AG04449 (cell line): ENCODE measurements at regions of chr17 and their contacts with region 1.

Region 1: GRCh38 chr17:27601069-27601975 is 29.7 kb upstream of the LGALS9 start:
- DNase-seq: no peak
- H3K4me3 ChIP-seq: no peak overlapping the region
- CTCF ChIP-seq: peak; percentile 85

Region 2: GRCh38 chr17:27332485-27333409 is 268.6 kb before region 1 on chr17:
- CTCF ChIA-PET with region 1: interaction called, 75 read pairs
- POLR2A ChIA-PET with region 1: interaction called, 3 read pairs
- DNase-seq: peak; percentile 65
- H3K4me3 ChIP-seq: peak overlapping the region; percentile 56
- CTCF ChIP-seq: peak; percentile 93

Region 3: DNA sequence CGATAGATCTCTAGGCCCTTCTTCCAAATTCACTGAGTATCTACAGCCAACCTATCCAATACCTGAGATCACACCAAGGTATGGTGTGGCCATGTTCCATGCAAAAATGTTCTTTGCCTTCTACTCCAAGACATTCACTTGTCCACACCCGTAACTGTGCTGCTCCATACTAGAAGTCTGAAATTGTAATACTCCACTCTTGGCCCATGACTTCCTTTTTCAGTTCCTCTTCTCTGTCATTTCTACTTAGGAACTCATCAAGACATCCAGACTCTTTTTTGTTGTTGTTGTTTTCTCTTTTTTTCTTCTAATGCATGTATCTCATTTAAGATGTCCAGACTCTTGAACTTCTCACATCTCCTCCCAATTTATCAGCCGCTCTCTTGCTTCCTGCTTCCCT is 187.5 kb before region 1 on chr17:
- CTCF ChIA-PET with region 1: interaction called, 29 read pairs
- POLR2A ChIA-PET with region 1: no interaction called
- DNase-seq: no peak
- H3K4me3 ChIP-seq: no peak overlapping the region
- CTCF ChIP-seq: no peak

Region 4: GRCh38 chr17:27494192-27495091 is 106.9 kb before region 1 on chr17:
- CTCF ChIA-PET with region 1: interaction called, 12 read pairs
- POLR2A ChIA-PET with region 1: no interaction called
- DNase-seq: no peak
- H3K4me3 ChIP-seq: no peak overlapping the region
- CTCF ChIP-seq: peak; percentile 17

Region 5: GRCh38 chr17:27586203-27586721 is 15.1 kb before region 1 on chr17:
- CTCF ChIA-PET with region 1: interaction called, 181 read pairs
- POLR2A ChIA-PET with region 1: interaction called, 4 read pairs
- DNase-seq: peak; percentile 68
- H3K4me3 ChIP-seq: no peak overlapping the region
- CTCF ChIP-seq: no peak

Region 6: DNA sequence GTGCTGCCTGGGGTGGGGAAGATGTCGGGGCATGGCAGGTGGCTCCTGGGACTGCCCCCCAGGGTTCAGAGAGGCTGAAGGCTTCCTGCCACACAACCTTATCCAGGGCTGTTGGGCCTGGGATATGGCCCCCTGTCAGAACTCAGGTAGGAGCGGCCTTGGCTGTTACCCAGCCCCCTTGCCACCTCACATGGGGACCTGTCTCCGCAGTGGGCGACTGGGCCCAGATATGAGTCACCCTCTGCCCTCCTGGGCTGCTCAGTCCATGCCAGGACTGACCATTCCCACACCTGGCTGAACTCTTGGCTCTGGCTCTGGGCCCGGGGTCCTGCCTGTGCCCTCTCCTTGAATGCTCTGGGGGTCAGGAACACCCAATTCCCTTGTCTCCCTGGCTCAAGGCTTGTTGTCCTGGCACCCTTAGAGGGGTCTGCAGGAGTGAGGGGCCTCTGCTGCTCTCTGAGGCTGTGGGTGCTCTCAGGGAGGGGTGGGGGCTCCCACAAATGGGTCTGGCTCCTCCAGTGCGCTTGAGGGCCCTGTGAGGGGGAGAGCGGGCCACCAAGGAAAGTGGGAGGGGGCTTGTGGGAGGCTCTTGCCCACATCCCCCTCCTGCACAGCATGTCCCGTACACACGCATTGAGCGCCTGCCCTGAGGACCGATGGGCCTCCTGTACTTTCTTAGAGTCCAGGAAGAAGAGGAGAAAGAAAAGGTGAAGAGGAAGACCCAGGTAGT is 65.7 kb after region 1 on chr17:
- CTCF ChIA-PET with region 1: no interaction called
- POLR2A ChIA-PET with region 1: no interaction called
- DNase-seq: no peak
- H3K4me3 ChIP-seq: no peak overlapping the region
- CTCF ChIP-seq: no peak

Region 7: DNA sequence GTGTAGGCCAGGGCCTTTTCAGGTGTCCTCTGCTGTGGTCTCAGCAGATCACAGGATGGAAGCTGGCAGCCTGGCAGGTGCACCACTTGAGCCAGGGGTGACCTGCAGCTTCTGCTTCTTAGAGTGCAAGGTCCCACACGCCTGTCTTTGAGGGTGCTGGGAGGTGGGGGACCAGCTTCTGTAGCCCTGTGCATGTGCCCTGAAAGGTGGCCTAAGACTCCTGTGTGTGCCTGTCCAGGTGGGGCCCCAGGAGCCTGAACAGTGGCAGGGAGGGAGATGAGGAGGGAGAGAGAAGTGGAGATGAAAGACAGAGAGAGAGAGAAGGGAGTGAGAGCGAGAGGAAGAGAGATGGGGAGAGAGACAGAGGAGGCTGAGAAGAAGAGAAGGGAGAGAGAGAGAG is 75.9 kb after region 1 on chr17:
- CTCF ChIA-PET with region 1: no interaction called
- POLR2A ChIA-PET with region 1: no interaction called
- DNase-seq: no peak
- H3K4me3 ChIP-seq: no peak overlapping the region
- CTCF ChIP-seq: no peak

Region 8: GRCh38 chr17:27743281-27743885 is 142.1 kb after region 1 on chr17:
- CTCF ChIA-PET with region 1: no interaction called
- POLR2A ChIA-PET with region 1: no interaction called
- DNase-seq: no peak
- H3K4me3 ChIP-seq: no peak overlapping the region
- CTCF ChIP-seq: no peak

Region 9: GRCh38 chr17:27879987-27880608 is 278.8 kb after region 1 on chr17:
- CTCF ChIA-PET with region 1: interaction called, 28 read pairs
- POLR2A ChIA-PET with region 1: no interaction called
- DNase-seq: no peak
- H3K4me3 ChIP-seq: no peak overlapping the region
- CTCF ChIP-seq: peak; percentile 92

Region 10: GRCh38 chr17:27907976-27908558 is 306.7 kb after region 1 on chr17:
- CTCF ChIA-PET with region 1: no interaction called
- POLR2A ChIA-PET with region 1: no interaction called
- DNase-seq: no peak
- H3K4me3 ChIP-seq: no peak overlapping the region
- CTCF ChIP-seq: no peak